WTC11 (cell line): ENCODE measurements at regions of chr17 and their contacts with region 1.

Region 1: GRCh38 chr17:40113110-40113906 is 8.5 kb upstream of the MSL1 start:
- DNase-seq: peak; percentile 92
- ATAC-seq: peak; percentile 35
- H3K4me3 Mint-ChIP-seq: peak overlapping the region; percentile 58
- H3K27ac Mint-ChIP-seq: peak overlapping the region; percentile 98
- H3K4me1 Mint-ChIP-seq: peaks cover 72% of the 10 kb centered on the region
- H3K27me3 Mint-ChIP-seq: peaks cover 3% of the 10 kb centered on the region
- CTCF ChIP-seq: peak; percentile 66

Region 2: DNA sequence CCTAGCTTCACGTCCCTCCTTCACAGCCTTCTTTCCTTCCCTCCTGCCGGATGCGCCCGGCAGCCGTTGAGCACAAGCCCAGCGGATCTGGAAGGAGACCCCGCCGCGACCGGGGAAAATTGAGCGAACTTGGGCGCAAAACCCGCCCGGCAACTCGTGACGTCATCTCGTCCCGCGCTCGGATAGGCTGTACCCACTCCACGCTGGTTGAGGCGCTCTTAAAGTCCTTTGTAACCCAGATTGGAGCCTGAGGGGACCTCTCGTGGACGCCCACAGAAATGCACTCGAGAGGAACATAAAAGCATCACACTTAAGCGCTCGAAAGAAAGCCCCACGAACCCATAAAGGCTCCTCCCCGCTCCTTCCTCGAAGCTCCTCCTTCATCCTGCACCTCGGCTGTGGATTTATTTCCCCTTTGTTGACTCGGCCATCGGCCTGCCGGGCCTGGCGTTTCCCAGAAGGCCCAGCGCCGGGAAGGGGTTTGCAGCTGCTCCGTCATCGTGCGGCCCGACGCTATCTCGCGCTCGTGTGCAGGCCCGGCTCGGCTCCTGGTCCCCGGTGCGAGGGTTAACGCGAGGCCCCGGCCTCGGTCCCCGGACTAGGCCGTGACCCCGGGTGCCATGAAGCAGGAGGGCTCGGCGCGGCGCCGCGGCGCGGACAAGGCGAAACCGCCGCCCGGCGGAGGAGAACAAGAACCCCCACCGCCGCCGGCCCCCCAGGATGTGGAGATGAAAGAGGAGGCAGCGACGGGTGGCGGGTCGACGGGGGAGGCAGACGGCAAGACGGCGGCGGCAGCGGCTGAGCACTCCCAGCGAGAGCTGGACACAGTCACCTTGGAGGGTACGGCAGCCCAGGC is 132.7 kb before region 1 on chr17 and contains the start of gene PSMD3:
- CTCF ChIA-PET with region 1: interaction called, 14 read pairs
- POLR2A ChIA-PET with region 1: interaction called, 5 read pairs
- DNase-seq: peak; percentile 98
- ATAC-seq: peak; percentile 94
- H3K4me3 Mint-ChIP-seq: peak within 1 kb of the TSS; percentile 89
- H3K27ac Mint-ChIP-seq: peak within 1 kb of the TSS; percentile 97
- H3K4me1 Mint-ChIP-seq: peaks cover 25% of the 10 kb centered on the region
- H3K27me3 Mint-ChIP-seq: no peaks in the 10 kb centered on the region
- CTCF ChIP-seq: peak; percentile 52
- total RNA-seq, gene PSMD3: 157 to 190 TPM (median 158 TPM) in 3 replicates

Region 3: GRCh38 chr17:40038882-40039513 is 74.3 kb before region 1 on chr17:
- CTCF ChIA-PET with region 1: interaction called, 79 read pairs
- POLR2A ChIA-PET with region 1: interaction called, 4 read pairs
- DNase-seq: peak; percentile 59
- ATAC-seq: peak; percentile 65
- H3K4me3 Mint-ChIP-seq: 0 out of 2 replicates have a peak overlapping the region, but pooled peaks have one; percentile 6
- H3K27ac Mint-ChIP-seq: peak overlapping the region; percentile 62
- H3K4me1 Mint-ChIP-seq: peaks cover 18% of the 10 kb centered on the region
- H3K27me3 Mint-ChIP-seq: no peaks in the 10 kb centered on the region
- CTCF ChIP-seq: 0 out of 2 replicates have a peak, but pooled peaks have one; percentile 11

Region 4: DNA sequence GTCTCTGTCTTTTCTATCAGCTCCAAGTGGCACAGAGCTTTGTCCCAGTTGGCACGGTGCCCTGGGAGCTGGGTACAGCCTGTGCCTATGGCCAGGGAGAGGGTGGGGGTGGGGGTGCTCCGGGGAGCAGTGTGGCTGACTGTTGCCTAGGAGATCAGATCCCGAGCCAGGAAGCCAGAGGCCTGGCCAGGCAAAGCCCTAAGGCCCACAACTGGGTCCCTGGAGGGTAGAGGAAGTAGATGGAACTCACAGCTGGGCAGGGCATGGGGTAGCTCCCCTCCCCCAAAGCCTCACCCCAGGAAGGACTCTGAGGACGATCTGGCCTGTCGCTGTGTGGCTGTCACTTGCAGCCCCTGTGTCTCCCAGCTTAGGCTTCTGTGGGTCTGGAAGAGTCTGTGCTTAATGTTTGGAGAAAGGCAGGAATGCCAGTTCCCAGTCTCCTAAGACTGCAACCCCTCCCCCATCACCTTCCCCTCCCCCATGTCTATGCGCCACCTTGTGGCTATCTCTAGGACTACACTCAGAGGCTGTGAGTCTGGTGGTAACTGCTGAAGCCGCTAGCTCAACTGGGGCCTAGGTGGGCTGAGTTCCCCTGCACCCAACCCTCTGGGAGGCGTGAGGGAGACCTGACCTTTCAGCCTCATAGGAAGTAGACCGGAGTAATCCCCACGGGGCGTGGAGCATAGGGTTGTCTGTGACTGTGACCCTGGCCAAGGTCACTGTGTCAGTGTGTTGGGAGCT is 37.9 kb before region 1 on chr17:
- CTCF ChIA-PET with region 1: interaction called, 82 read pairs
- POLR2A ChIA-PET with region 1: interaction called, 9 read pairs
- DNase-seq: peak; percentile 87
- ATAC-seq: peak; percentile 74
- H3K4me3 Mint-ChIP-seq: no peak overlapping the region
- H3K27ac Mint-ChIP-seq: peak overlapping the region; percentile 70; the same call in 1 of the 2 replicates
- H3K4me1 Mint-ChIP-seq: peaks cover 47% of the 10 kb centered on the region
- H3K27me3 Mint-ChIP-seq: no peaks in the 10 kb centered on the region
- CTCF ChIP-seq: peak; percentile 88

Region 5: DNA sequence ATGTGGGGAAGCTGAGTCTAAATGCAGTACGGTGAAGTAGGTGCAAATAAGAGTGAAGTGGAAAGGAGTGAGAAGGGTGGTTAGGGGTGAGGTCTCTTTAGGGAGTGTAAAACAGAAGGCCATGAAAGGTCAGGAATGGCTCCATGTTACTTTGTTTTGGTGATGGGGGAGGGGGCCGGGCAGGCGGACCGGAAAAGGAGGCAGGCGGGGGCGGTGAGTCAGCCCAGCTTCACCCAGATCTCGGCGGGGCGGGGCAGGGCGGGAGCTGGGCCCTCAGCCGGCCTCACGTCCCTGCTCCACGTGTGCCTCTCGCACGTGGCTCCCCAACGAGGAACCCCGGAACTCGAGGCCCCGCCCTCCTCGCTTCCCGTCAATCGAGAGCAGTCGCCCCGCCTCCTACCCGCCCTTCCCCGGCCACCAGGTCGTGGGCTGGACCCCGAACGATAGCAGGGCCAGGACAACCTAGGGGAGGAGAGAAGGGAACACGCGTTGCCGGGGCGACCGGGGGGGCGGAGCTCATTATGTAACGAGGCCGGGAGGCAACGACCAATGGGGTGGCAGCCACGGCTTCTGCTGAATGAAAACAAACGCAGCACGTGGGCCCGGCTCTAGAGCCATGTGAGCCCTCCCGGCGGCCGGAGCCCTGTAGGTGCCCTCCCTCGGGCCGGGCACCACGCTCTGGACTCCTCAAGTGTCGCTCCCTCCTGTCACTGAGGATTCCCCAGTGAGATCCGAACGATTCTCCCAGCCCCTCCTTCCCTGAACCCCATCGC is 14.3 kb before region 1 on chr17:
- CTCF ChIA-PET with region 1: interaction called, 185 read pairs
- POLR2A ChIA-PET with region 1: interaction called, 56 read pairs
- DNase-seq: peak; percentile 99
- ATAC-seq: peak; percentile 79
- H3K4me3 Mint-ChIP-seq: peak overlapping the region; percentile 79
- H3K27ac Mint-ChIP-seq: peak overlapping the region; percentile 44
- H3K4me1 Mint-ChIP-seq: peaks cover 51% of the 10 kb centered on the region
- H3K27me3 Mint-ChIP-seq: peaks cover 47% of the 10 kb centered on the region
- CTCF ChIP-seq: no peak

Region 6: GRCh38 chr17:40177275-40177874 is 64.1 kb after region 1 on chr17 and contains the start of gene RAPGEFL1:
- CTCF ChIA-PET with region 1: interaction called, 16 read pairs
- POLR2A ChIA-PET with region 1: interaction called, 3 read pairs
- DNase-seq: peak; percentile 88
- ATAC-seq: peak; percentile 86
- H3K4me3 Mint-ChIP-seq: peak within 1 kb of the TSS; percentile 65
- H3K27ac Mint-ChIP-seq: no peak within 1 kb of the TSS
- H3K4me1 Mint-ChIP-seq: peaks cover 20% of the 10 kb centered on the region
- H3K27me3 Mint-ChIP-seq: no peaks in the 10 kb centered on the region
- CTCF ChIP-seq: no peak
- total RNA-seq, gene RAPGEFL1: 19.9 to 23.0 TPM (median 19.9 TPM) in 3 replicates

Region 7: GRCh38 chr17:40219073-40219860 is 106.0 kb after region 1 on chr17 and contains the start of gene WIPF2:
- CTCF ChIA-PET with region 1: interaction called, 10 read pairs
- POLR2A ChIA-PET with region 1: no interaction called
- DNase-seq: peak; percentile 99
- ATAC-seq: peak; percentile 90
- H3K4me3 Mint-ChIP-seq: peak within 1 kb of the TSS; percentile 90
- H3K27ac Mint-ChIP-seq: peak within 1 kb of the TSS; percentile 100
- H3K4me1 Mint-ChIP-seq: peaks cover 18% of the 10 kb centered on the region
- H3K27me3 Mint-ChIP-seq: no peaks in the 10 kb centered on the region; the same call in 1 of the 2 replicates
- CTCF ChIP-seq: peak; percentile 81
- total RNA-seq, gene WIPF2: 23.0 to 24.6 TPM (median 23.8 TPM) in 3 replicates